Activated CD8-positive, alpha-beta T cell treated with anti-CD3 and anti-CD28 coated beads for 36 hours (primary cell): ENCODE measurements at regions of chr1 and their contacts with region 1.

Region 1: DNA sequence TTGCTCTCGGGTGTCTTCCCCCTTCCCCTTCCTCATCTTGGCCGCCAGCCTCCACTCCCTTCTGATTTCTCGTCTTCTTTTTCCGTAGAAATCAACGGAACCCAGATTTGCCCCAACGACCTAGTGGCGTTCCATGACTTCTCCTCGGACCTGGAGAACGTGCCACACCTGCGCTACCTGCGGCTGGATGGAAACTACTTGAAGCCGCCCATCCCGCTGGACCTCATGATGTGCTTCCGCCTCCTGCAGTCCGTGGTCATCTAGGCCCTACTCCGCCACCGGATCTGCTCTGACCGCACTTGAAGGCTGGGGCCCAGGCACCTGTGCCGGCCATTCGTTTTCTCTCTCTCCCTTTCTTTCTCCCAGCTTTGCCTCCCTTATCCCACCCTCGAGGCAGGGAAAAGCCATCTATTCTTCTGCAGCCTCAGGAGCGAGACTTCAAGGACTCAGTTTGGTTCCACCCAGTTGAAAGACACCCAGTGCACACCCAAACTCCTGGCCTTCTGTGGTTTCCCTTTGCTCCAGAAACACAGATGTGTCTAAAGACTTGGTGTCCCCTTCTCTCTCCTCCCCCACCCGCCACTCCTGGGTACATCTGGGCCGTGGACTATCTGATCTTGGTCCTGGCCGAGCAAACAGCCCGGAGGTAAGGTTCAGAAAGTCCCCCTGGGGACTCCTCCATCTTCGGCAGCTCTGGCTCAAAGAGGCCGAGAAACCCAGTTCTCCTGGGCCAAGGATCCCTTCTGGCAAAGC is 7.2 kb upstream of the OPTC start:
- DNase-seq: no peak
- ATAC-seq: no peak
- H3K4me3 Mint-ChIP-seq: peak overlapping the region; percentile 58
- H3K27ac Mint-ChIP-seq: no peak overlapping the region
- H3K4me1 Mint-ChIP-seq: peaks cover 6% of the 10 kb centered on the region
- H3K27me3 Mint-ChIP-seq: no peaks in the 10 kb centered on the region
- CTCF ChIP-seq: no peak

Region 2: DNA sequence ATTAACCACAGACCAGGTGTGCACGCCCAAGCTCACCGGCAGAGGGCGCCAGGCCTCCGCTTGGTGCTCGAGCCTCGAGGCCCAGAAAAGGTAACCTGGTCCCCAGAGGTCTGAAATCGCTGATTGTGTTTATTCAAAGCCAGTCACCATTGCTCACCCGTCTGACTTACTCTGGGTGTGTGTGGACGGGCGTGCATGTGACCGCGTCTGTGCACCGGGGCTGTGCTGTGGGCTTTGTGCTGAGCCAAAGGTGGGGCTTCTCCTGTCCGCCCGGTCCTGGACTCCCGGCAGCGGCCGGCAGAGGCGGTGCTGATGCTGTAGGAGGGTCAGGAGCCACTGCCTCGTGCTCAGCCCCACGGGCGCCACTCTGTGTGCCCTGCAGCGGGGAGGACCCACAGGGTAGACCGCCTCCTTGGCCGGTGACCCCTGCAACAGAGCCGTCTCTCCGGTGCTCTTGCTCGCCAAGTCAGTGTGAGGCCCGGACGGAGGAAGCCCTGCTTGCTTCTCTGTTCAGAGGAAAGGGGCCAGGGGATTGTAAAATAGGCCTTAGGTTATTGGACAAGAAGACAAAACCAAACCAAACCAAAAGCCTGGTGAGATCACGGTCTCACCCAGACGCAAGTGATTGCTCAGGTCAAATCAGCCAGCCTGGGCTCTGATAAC is 213.5 kb before region 1 on chr1:
- CTCF ChIA-PET with region 1: interaction called, 166 read pairs
- POLR2A ChIA-PET with region 1: no interaction called
- intact Hi-C with region 1: no loop called
- DNase-seq: peak; percentile 94
- ATAC-seq: peak; percentile 73
- H3K4me3 Mint-ChIP-seq: peak overlapping the region; percentile 77
- H3K27ac Mint-ChIP-seq: peak overlapping the region; percentile 83
- H3K4me1 Mint-ChIP-seq: peaks cover 57% of the 10 kb centered on the region
- H3K27me3 Mint-ChIP-seq: no peaks in the 10 kb centered on the region
- CTCF ChIP-seq: peak; percentile 93

Region 3: GRCh38 chr1:203470229-203470628 is 16.6 kb before region 1 on chr1:
- CTCF ChIA-PET with region 1: interaction called, 39 read pairs
- POLR2A ChIA-PET with region 1: no interaction called
- intact Hi-C with region 1: no loop called
- DNase-seq: no peak
- ATAC-seq: no peak
- H3K4me3 Mint-ChIP-seq: no peak overlapping the region
- H3K27ac Mint-ChIP-seq: no peak overlapping the region
- H3K4me1 Mint-ChIP-seq: no peaks in the 10 kb centered on the region
- H3K27me3 Mint-ChIP-seq: peaks cover 4% of the 10 kb centered on the region
- CTCF ChIP-seq: no peak

Region 4: GRCh38 chr1:203524152-203524551 is 37.4 kb after region 1 on chr1:
- CTCF ChIA-PET with region 1: no interaction called
- POLR2A ChIA-PET with region 1: no interaction called
- intact Hi-C with region 1: no loop called
- DNase-seq: no peak
- ATAC-seq: no peak
- H3K4me3 Mint-ChIP-seq: no peak overlapping the region
- H3K27ac Mint-ChIP-seq: no peak overlapping the region
- H3K4me1 Mint-ChIP-seq: no peaks in the 10 kb centered on the region
- H3K27me3 Mint-ChIP-seq: no peaks in the 10 kb centered on the region
- CTCF ChIP-seq: no peak